ENCODE measurements at regions of chr3 and their contacts with region 1.

Region 1: DNA sequence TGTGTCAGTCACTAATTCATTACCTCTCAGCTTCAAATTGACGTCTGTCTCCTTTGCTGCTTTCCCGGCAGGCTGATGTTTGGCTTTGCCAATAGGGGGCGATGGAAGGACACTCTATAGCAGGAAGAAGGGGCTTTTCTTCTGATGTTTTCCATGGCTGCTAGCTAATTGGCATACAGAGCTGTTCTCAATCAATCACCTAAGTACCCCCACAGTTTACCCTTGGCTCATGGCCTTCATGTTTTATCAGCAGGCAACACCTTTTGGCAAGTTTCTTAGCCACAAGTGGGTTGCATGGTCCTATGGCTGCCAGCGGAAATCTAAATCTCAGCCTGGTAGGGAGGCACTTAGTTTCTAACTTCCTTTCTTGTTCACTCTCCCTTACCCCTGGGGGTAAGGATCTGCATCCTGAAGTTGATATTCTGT is 45.0 kb downstream of the ESYT3 start:
- DNase-seq: peak; percentile 54
- H3K4me3 Mint-ChIP-seq: no peak overlapping the region
- H3K27ac Mint-ChIP-seq: no peak overlapping the region
- H3K4me1 Mint-ChIP-seq: no peaks in the 10 kb centered on the region
- H3K27me3 Mint-ChIP-seq: peaks cover 5% of the 10 kb centered on the region

Region 2: DNA sequence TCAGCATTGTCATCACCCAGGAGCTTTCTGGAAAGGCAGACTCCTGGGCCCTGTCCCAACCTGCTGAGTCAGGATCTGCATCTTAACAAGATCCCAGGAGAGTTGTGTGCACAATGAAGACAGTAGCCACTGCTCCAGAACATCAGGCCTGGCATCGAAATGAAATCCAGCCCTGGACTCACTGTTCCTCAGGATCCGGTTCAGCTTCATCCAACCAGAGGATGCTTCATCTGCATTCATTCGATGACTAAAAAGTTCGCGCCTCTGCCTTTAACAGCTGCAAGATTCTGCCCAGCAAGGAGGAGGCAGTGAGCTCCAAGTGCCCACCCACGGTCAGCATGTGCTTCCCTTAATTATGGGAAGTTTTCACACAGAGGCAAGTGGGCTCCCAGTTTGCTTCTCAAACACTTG is 70.7 kb before region 1 on chr3:
- CTCF ChIA-PET with region 1: no interaction called
- POLR2A ChIA-PET with region 1: no interaction called
- intact Hi-C with region 1: no loop called
- DNase-seq: no peak
- H3K4me3 Mint-ChIP-seq: no peak overlapping the region
- H3K27ac Mint-ChIP-seq: no peak overlapping the region
- H3K4me1 Mint-ChIP-seq: no peaks in the 10 kb centered on the region
- H3K27me3 Mint-ChIP-seq: peaks cover 2% of the 10 kb centered on the region

Region 3: GRCh38 chr3:138673641-138674530 is 194.4 kb after region 1 on chr3:
- CTCF ChIA-PET with region 1: no interaction called
- POLR2A ChIA-PET with region 1: no interaction called
- intact Hi-C with region 1: no loop called
- DNase-seq: no peak
- H3K4me3 Mint-ChIP-seq: no peak overlapping the region
- H3K27ac Mint-ChIP-seq: no peak overlapping the region
- H3K4me1 Mint-ChIP-seq: no peaks in the 10 kb centered on the region
- H3K27me3 Mint-ChIP-seq: no peaks in the 10 kb centered on the region

Region 4: DNA sequence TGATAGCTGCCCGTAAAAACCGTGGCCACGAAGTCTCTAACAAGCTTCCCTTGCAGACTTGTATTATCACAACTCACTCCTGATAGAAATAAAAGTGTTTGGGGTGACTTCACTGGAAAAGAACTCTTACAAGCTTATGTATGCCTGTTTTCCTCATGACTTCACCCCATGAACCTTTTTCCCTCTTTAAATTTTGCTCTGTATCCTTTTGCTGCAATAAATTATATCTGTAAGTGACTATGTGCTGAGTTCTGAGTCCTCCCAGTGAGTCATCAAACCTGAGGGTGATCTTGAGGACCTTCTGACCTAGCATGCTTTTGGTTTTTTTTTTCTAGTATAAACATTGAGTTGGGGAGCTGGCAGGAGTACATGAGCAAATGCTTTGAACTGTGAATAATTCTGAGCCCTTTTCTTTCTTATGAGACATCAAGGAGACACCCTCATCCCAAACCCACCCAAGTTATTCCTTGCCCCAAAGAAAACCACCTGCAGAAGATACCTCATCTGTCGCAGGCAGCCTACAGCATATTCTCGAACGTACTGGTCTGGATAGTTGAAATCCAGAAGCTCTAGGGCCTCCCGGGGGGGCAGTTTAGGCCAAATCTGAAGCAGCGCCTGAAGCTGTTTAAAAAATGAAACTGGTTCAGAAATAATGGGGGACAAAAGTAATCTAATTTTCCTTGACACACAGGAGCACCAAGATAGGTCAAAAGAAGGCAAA is 215.0 kb after region 1 on chr3:
- CTCF ChIA-PET with region 1: interaction called, 4 read pairs
- POLR2A ChIA-PET with region 1: no interaction called
- intact Hi-C with region 1: loop called (anchors 5 kb)
- DNase-seq: no peak
- H3K4me3 Mint-ChIP-seq: no peak overlapping the region
- H3K27ac Mint-ChIP-seq: no peak overlapping the region
- H3K4me1 Mint-ChIP-seq: no peaks in the 10 kb centered on the region
- H3K27me3 Mint-ChIP-seq: no peaks in the 10 kb centered on the region